Uterus (tissue), 4 donors: ENCODE measurements at regions of chr14 and their contacts with region 1.

Region 1: GRCh38 chr14:22391912-22392421 is 197.1 kb downstream of the DAD1 start:
- DNase-seq: peak; percentile 49 to 72
- H3K4me3 ChIP-seq: no peak overlapping the region
- H3K27ac ChIP-seq: no peak overlapping the region
- H3K4me1 ChIP-seq: no peaks in the 10 kb centered on the region
- H3K27me3 ChIP-seq: no peaks in the 10 kb centered on the region
- CTCF ChIP-seq: peak; percentile 69 to 87 (median 80)
- POLR2A ChIP-seq: no peak

Region 2: GRCh38 chr14:22472935-22473854 is 81.2 kb after region 1 on chr14:
- intact Hi-C with region 1: loop called (anchors 10 kb)
- DNase-seq: peak in 1 of 2 donors; percentile 40
- H3K4me3 ChIP-seq: no peak overlapping the region
- H3K27ac ChIP-seq: no peak overlapping the region
- H3K4me1 ChIP-seq: peaks cover under 1 to 4% of the 10 kb centered on the region in 2 donors
- H3K27me3 ChIP-seq: no peaks in the 10 kb centered on the region
- CTCF ChIP-seq: peak; percentile 20 to 58 (median 28)
- POLR2A ChIP-seq: no peak